ENCODE measurements at regions of chr4 and their contacts with region 1.

Region 1: GRCh38 chr4:113547487-113548042 is 214.0 kb downstream of the CAMK2D start:
- DNase-seq: peak; percentile 89
- H3K4me3 ChIP-seq: no peak overlapping the region
- H3K27ac ChIP-seq: peak overlapping the region; percentile 19 to 54 (median 33)
- H3K4me1 ChIP-seq: peaks cover 0 to 14% (median 7%) of the 10 kb centered on the region in 4 donors
- H3K27me3 ChIP-seq: no peaks in the 10 kb centered on the region
- CTCF ChIP-seq: peak; percentile 76 to 99 (median 94)
- EP300 ChIP-seq: no peak
- POLR2A ChIP-seq: no peak

Region 2: DNA sequence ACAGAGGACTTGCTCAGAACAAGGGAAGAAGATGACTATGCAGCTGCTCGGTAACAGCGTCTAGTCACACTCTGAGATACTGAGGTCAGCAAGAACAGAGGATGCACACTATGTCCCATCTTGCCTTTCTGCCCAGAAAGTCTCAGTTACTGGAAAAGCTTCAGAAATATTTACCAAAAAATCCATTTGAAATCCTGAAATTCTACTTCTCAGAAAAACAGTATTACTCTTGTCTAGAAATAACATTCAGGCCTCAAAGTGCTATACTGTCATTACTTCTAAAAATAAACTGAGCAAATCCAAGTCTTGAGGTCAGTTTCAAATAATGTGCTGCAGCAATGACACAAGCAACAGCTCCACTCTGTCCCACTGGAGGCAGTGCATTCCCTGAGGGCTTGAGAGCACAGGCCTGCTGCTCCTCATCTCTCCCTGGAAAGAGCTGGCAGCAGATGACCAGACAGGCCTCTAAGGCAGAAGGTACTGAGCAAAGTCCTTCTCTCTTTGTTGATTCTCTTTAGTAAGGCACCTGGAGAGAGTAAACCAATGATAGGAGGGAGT is 137.0 kb after region 1 on chr4:
- intact Hi-C with region 1: loop called (anchors 5 kb)
- DNase-seq: peak; percentile 83
- H3K4me3 ChIP-seq: no peak overlapping the region
- H3K27ac ChIP-seq: peak overlapping the region; percentile 46 to 77 (median 70)
- H3K4me1 ChIP-seq: peaks cover 0 to 46% (median 38%) of the 10 kb centered on the region in 4 donors
- H3K27me3 ChIP-seq: no peaks in the 10 kb centered on the region
- CTCF ChIP-seq: peak; percentile 9 to 41 (median 35)
- EP300 ChIP-seq: peak in 2 of 4 donors; percentile 16 to 38
- POLR2A ChIP-seq: no peak

Region 3: DNA sequence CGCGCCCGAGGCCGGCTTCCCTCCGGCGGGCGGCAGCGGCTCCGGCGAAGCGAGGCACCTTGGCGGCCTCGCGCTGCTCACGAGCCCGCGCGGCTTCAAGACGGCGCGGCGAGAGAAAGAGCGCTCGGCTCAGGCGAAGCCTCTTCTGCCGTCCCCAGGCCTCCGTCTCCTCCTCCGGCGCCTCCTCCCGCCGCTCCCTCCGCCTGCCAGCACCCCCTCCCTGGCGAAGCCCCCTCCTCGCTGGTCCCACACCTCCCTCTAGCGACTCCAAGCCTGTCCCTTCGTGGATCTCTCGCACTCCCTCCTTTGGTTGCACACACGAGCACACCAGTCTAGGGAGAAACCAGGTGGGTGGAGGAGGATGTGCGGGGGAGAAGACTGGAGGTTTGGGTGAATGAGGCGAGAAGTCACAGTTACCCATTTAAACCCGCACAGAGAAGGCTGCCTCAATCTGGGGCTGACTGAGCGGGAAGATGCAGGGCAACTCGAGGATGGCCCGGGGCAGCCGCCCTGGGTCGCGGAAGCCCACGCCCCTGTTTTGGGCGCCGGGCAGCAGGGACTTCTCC is 214.1 kb after region 1 on chr4 and contains the start of gene CAMK2D:
- intact Hi-C with region 1: loop called (anchors 1 kb)
- DNase-seq: peak; percentile 95
- H3K4me3 ChIP-seq: peak within 1 kb of the TSS; percentile 75 to 89 (median 80)
- H3K27ac ChIP-seq: peak within 1 kb of the TSS; percentile 92 to 99 (median 98)
- H3K4me1 ChIP-seq: peaks cover 0 to 34% (median 24%) of the 10 kb centered on the region in 4 donors
- H3K27me3 ChIP-seq: no peaks in the 10 kb centered on the region
- CTCF ChIP-seq: peak in 3 of 4 experiments; percentile 42 to 64 (median 47)
- EP300 ChIP-seq: no peak
- POLR2A ChIP-seq: peak; percentile 27 to 36
- total RNA-seq, gene CAMK2D: 54.0 to 78.1 (median 68.8) TPM

Region 4: DNA sequence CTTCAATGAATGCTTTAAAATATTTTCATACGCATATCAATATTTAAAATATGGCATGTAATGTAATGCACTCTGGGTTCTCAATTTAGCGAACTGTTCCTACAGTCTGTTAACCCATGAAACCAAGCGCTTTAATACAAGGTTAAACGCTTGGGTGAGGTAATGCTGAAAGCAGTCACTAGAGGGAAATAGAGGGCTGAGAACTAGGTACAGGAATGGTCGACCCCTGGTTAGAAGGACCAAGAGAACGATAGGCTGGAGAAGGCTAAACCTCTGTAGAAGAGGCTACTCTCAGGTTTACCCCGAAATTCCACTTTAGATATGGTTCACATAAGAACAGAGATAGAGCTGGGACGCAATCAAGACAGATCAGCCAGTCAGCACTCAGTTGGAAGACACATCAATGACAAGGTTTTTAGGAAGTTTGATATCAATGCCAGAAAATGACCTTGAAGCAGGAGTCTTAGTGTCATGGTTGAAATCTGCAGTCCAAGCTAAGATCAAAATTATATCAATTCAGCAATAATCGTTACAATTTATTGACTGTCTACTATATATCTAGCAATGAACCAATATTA is 405.0 kb after region 1 on chr4:
- intact Hi-C with region 1: loop called (anchors 10 kb)
- DNase-seq: no peak
- H3K4me3 ChIP-seq: no peak overlapping the region
- H3K27ac ChIP-seq: no peak overlapping the region
- H3K4me1 ChIP-seq: peaks cover 0 to 46% (median 26%) of the 10 kb centered on the region in 4 donors
- H3K27me3 ChIP-seq: no peaks in the 10 kb centered on the region
- CTCF ChIP-seq: peak; percentile 12 to 81 (median 62)
- EP300 ChIP-seq: no peak
- POLR2A ChIP-seq: no peak

Region 5: DNA sequence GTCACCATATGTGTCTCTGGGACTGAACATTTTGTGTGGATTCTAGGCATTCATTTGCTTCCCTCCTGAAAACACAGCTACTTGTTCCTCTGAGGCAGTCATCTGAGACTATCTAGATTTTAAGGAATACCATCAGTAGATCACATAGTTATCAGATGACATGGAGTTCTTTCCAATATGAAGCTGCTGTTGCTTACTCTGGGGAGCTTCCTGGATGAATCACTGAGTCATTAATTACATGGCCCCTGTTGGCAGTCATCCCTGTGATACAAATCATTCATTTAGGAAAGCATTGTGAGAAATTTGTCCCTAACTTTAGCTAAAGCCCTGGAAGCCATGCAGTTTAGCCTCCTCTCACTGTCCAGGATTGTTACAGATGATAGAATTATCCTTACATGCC is 530.0 kb after region 1 on chr4:
- intact Hi-C with region 1: loop called (anchors 5 kb)
- DNase-seq: no peak
- H3K4me3 ChIP-seq: no peak overlapping the region
- H3K27ac ChIP-seq: no peak overlapping the region
- H3K4me1 ChIP-seq: no peaks in the 10 kb centered on the region
- H3K27me3 ChIP-seq: no peaks in the 10 kb centered on the region
- CTCF ChIP-seq: no peak
- EP300 ChIP-seq: no peak
- POLR2A ChIP-seq: no peak

Region 6: GRCh38 chr4:114378306-114378903 is 830.8 kb after region 1 on chr4:
- intact Hi-C with region 1: loop called (anchors 10 kb)
- DNase-seq: no peak
- H3K4me3 ChIP-seq: no peak overlapping the region
- H3K27ac ChIP-seq: no peak overlapping the region
- H3K4me1 ChIP-seq: peaks cover 0 to 7% (median 3%) of the 10 kb centered on the region in 4 donors
- H3K27me3 ChIP-seq: no peaks in the 10 kb centered on the region
- CTCF ChIP-seq: peak in 1 of 4 experiments; percentile 41
- EP300 ChIP-seq: no peak
- POLR2A ChIP-seq: no peak